Activated naive CD4-positive, alpha-beta T cell treated with anti-CD3 and anti-CD28 coated beads for 36 hours (primary cell): ENCODE measurements at regions of chr4 and their contacts with region 1.

Region 1: DNA sequence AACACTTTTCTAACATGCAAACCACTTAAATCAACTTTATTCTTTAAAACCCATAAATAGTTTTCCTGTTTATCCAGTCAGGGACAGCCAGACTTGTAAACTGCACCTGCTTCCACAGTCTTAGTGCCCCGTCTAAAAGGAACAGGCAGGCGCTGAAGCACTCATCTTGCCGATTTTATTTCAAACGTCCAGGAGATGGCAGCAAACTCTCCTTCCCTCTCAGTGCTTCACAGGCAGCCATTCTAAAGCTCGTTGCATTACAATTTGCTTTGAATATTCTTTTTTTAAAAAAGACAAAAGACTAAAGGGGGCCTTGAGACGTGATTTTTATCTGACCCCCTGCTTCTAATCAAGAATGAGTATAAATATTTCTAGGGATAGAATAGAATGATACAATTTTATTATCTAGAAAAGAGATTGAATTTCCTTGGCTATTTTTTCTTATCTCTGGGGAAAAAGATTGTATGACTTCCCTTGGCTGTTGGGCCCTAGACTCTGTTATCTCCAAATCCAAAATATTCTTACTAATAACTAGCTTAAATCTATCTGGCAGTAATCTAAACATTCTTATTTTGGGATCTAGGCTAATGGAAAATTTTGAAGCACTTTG is 93.6 kb upstream of the MYOZ2 start:
- DNase-seq: peak; percentile 75
- H3K4me3 Mint-ChIP-seq: no peak overlapping the region
- H3K27ac Mint-ChIP-seq: no peak overlapping the region
- H3K4me1 Mint-ChIP-seq: peaks cover 13% of the 10 kb centered on the region
- H3K27me3 Mint-ChIP-seq: no peaks in the 10 kb centered on the region

Region 2: DNA sequence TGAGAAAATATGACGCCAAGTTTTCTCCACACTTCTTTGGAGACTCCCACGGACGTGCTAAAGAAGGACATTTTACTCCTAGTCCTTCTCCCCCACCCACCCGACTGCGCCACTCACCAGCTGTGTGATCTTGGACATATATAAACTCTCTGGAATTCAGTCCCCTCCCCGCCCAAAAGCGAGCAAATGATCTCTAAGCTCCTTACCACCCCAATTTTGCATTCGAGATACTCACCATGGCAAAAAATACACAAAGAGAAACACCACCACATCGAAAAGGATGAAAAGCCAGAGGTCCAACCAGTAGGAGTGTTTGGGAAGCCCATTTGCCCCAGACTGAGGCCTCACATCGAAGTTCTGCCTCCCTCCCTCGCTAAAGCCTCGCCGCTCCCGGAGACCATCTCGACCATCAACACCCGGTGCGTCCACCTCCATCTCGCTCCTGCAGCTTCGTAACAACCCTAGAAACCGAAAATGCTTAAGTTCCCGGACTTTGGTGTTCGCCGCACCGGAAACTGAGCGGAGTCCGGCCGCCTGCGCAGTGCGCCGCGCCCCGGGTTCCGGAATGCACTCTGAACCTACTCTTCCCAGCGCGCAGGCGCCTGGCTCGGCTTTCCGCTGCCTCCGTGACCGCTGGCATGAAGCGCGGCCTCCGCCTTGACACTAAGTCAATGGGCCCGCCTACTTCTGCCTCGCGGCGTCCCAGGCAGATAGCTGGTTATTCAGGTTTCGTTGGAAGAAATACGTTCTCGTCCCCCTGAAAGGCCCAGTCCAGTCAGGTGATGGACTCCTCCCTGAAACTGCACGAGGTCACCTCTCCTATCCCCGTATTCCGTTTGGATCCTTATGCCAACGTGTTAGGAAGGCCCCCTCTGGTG is 258.3 kb after region 1 on chr4:
- CTCF ChIA-PET with region 1: interaction called, 32 read pairs
- intact Hi-C with region 1: loop called (anchors 1 kb)
- DNase-seq: peak; percentile 92
- H3K4me3 Mint-ChIP-seq: peak overlapping the region; percentile 97
- H3K27ac Mint-ChIP-seq: peak overlapping the region; percentile 95
- H3K4me1 Mint-ChIP-seq: peaks cover 25% of the 10 kb centered on the region
- H3K27me3 Mint-ChIP-seq: no peaks in the 10 kb centered on the region

Region 3: GRCh38 chr4:120865985-120866384 is 1823.9 kb after region 1 on chr4:
- CTCF ChIA-PET with region 1: no interaction called
- intact Hi-C with region 1: no loop called
- DNase-seq: no peak
- H3K4me3 Mint-ChIP-seq: no peak overlapping the region
- H3K27ac Mint-ChIP-seq: no peak overlapping the region
- H3K4me1 Mint-ChIP-seq: no peaks in the 10 kb centered on the region
- H3K27me3 Mint-ChIP-seq: no peaks in the 10 kb centered on the region